ENCODE measurements at regions of chr1 and their contacts with region 1.

Region 1: GRCh38 chr1:220690140-220691025 is at the start of gene C1orf115:
- DNase-seq: peak in 8 of 10 donors; percentile 34 to 83 (median 54)
- H3K4me3 ChIP-seq: peak within 1 kb of the TSS; percentile 34 to 85 (median 71)
- H3K27ac ChIP-seq: peak within 1 kb of the TSS in 57 of 59 donors; percentile 27 to 95 (median 83)
- H3K27me3 ChIP-seq: peaks cover 0 to 25% (median 0%) of the 10 kb centered on the region in 45 donors
- CTCF ChIP-seq: peak; percentile 58 to 95 (median 84)
- total RNA-seq, gene C1orf115: 19.7 to 154 (median 80.6) TPM

Region 2: DNA sequence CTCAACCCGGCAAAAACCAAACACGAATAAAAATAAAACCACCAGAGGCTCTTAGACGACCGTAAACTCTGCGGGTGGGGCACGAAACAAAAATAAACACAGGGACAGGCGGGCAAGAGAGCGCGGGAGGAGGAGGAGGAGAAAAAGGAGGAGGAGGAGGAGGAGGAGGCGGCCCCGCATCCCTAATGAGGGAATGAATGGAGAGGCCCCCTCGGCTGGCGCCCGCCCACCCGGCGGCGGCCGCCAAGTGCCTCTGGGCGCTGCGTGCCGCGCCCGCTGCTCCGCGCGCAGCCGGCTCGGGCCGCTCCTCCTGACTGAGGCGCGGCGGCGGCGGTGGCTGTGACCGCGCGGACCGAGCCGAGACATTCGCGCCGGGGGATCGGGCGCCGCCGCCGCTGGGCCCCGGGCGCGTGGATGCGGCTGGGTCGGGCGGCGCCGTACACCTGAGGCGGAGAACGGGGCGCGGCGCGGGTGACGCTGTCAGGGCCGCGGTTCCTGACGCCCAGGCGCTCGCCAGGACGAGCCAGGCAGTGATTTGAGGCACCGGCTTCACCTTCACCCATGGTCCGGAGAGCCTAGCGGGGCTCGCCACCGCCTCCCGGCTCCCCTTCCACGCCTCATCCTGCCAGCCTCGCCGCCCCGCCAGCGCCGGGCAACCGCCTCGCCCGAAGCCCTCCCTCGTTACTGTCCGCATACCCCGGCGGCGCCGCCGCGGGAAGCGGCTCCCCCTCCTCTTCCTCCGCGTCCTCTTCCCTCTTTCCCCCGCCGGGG is 162.3 kb before region 1 on chr1 and contains the start of gene MARK1:
- intact Hi-C with region 1: loop called in 1 of 2 experiments (anchors 5 kb)
- DNase-seq: peak; percentile 25 to 80 (median 56)
- H3K4me3 ChIP-seq: peak within 1 kb of the TSS; percentile 62 to 96 (median 80)
- H3K27ac ChIP-seq: peak within 1 kb of the TSS; percentile 15 to 95 (median 89)
- H3K27me3 ChIP-seq: peaks cover 0 to 10% (median 0%) of the 10 kb centered on the region in 45 donors
- CTCF ChIP-seq: no peak
- total RNA-seq, gene MARK1: 13.1 to 44.7 (median 30.9) TPM